ENCODE measurements at regions of chr11 and their contacts with region 1.

Region 1: DNA sequence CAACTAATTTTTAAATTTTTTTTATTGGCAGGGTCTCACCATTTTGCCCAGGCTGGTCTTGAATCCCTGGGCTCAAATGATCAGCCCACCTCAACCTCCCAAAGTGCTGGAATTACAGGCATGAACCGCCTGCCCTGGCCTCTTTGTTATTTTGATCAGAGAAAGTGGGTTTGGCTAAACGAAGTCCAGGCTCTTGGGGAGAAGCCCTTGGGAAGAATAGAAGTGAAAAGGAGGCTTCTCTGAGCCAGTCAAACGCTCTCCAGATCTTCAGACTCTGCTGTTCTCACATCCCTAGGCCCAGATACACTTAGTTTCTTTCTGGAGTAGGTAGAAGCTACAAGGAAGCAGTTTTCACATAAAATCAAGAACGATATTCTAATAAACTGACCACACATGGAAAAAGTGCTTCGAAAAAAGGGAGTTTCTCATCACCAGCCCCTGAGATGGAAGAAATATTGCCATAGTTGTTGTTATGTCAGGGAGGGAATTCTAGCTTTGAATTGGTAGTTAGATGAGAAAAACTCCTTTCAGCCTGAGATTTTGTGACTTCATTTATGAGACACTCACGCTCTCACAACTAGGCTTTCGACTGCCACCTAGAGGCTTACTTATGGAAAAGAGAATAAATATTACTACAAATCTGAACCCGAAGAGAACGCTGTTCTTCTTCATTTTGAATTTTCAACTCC is 41.7 kb upstream of the AQP11 start:
- DNase-seq: peak; percentile 38
- ATAC-seq: peak; percentile 83
- H3K4me3 ChIP-seq: no peak overlapping the region
- H3K27ac ChIP-seq: no peak overlapping the region
- H3K4me1 ChIP-seq: no peaks in the 10 kb centered on the region
- H3K27me3 ChIP-seq: no peaks in the 10 kb centered on the region
- CTCF ChIP-seq: peak; percentile 46 to 76 (median 59); a peak in 5 of 6 replicates
- EP300 ChIP-seq: no peak
- POLR2A ChIP-seq: no peak
- RAD21 ChIP-seq: peak; percentile 92

Region 2: DNA sequence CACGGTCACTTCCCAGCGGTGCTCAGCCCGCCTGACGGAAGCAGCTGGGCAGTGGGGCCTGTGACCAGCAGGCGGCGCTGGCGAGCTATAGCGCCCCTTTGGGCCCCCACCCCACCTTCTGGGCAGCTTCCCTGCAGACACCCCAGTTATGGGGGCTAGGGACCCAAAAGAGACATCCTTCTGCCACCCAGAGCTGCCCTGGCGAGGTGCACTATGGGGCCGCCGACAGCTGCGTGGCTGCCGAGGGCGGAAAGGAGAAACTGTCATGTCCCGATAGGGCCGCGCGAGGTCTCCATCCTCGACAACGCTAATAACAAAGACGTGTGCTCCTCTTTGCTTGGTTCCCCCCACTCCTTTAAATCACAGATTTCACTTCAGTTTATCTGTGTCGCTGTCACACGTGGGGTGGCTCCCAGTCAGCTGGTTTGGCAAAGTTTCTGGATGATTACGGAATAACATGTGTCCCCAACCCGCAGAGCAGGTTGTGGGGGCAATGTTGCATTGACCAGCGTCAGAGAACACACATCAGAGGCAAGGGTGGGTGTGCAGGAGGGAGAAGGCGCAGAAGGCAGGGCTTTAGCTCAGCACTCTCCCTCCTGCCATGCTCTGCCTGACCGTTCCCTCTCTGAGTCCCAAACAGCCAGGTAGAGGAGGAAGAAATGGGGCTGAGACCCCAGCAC is 420.6 kb before region 1 on chr11:
- CTCF ChIA-PET with region 1: interaction called, 23 read pairs
- POLR2A ChIA-PET with region 1: interaction called, 4 read pairs
- RAD21 ChIA-PET with region 1: interaction called, 13 read pairs
- SMC1A ChIA-PET with region 1: interaction called, 10 read pairs
- in situ Hi-C with region 1: no loop called
- intact Hi-C with region 1: loop called (anchors 5 kb)
- DNase-seq: no peak
- ATAC-seq: peak; percentile 88
- H3K4me3 ChIP-seq: no peak overlapping the region
- H3K27ac ChIP-seq: no peak overlapping the region
- H3K4me1 ChIP-seq: 0 out of 2 replicates have a peak, but pooled peaks cover 3% of the 10 kb centered on the region
- H3K27me3 ChIP-seq: peaks cover 0 to 3% of the 10 kb centered on the region in 2 experiments; a peak in 2 of 4 replicates
- CTCF ChIP-seq: peak; percentile 84 to 99 (median 98)
- EP300 ChIP-seq: no peak
- POLR2A ChIP-seq: no peak
- RAD21 ChIP-seq: peak; percentile 59

Region 3: GRCh38 chr11:77198440-77198849 is 349.6 kb before region 1 on chr11:
- CTCF ChIA-PET with region 1: interaction called, 40 read pairs
- POLR2A ChIA-PET with region 1: no interaction called
- RAD21 ChIA-PET with region 1: interaction called, 26 read pairs
- SMC1A ChIA-PET with region 1: interaction called, 19 read pairs
- in situ Hi-C with region 1: loop called (anchors 5 kb)
- intact Hi-C with region 1: loop called (anchors 2 kb)
- DNase-seq: no peak
- ATAC-seq: peak; percentile 83
- H3K4me3 ChIP-seq: no peak overlapping the region
- H3K27ac ChIP-seq: no peak overlapping the region
- H3K4me1 ChIP-seq: no peaks in the 10 kb centered on the region
- H3K27me3 ChIP-seq: no peaks in the 10 kb centered on the region
- CTCF ChIP-seq: peak in 2 of 3 experiments; percentile 45 to 51; a peak in 3 of 6 replicates
- EP300 ChIP-seq: no peak
- POLR2A ChIP-seq: no peak
- RAD21 ChIP-seq: no peak

Region 4: DNA sequence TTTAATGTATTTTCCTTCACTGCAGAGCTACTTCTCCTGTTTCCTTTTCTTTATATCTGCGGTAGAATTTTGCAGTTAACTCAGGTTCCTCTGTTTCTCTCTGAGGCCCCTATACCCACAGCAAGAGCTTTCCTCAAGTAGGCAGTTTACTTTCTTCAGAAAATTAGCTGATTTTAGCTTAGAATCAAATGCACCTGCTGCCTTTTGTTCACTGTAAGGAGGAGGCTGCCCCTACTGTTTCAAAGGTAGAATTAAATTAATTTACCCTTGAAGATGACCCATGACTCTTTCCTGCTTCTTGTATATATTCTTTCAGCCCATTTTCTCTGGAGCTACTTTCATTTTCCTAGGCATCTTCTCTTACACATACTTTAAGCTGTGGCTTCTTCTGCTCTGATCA is 177.8 kb before region 1 on chr11:
- CTCF ChIA-PET with region 1: interaction called, 10 read pairs
- POLR2A ChIA-PET with region 1: no interaction called
- RAD21 ChIA-PET with region 1: no interaction called
- SMC1A ChIA-PET with region 1: no interaction called
- in situ Hi-C with region 1: no loop called
- intact Hi-C with region 1: no loop called
- DNase-seq: no peak
- ATAC-seq: peak; percentile 39; the same call in 1 of the 3 replicates
- H3K4me3 ChIP-seq: no peak overlapping the region
- H3K27ac ChIP-seq: no peak overlapping the region
- H3K4me1 ChIP-seq: no peaks in the 10 kb centered on the region
- H3K27me3 ChIP-seq: no peaks in the 10 kb centered on the region
- CTCF ChIP-seq: no peak; a peak in 1 of 6 replicates
- EP300 ChIP-seq: no peak
- POLR2A ChIP-seq: no peak
- RAD21 ChIP-seq: no peak

Region 5: GRCh38 chr11:77400773-77401449 is 147.1 kb before region 1 on chr11:
- CTCF ChIA-PET with region 1: interaction called, 17 read pairs
- POLR2A ChIA-PET with region 1: no interaction called
- RAD21 ChIA-PET with region 1: interaction called, 13 read pairs
- SMC1A ChIA-PET with region 1: interaction called, 14 read pairs
- in situ Hi-C with region 1: no loop called
- intact Hi-C with region 1: no loop called
- DNase-seq: no peak
- ATAC-seq: peak; percentile 75
- H3K4me3 ChIP-seq: no peak overlapping the region
- H3K27ac ChIP-seq: peak overlapping the region; percentile 17; the same call in 1 of the 2 replicates
- H3K4me1 ChIP-seq: peaks cover 19% of the 10 kb centered on the region
- H3K27me3 ChIP-seq: no peaks in the 10 kb centered on the region
- CTCF ChIP-seq: peak; percentile 14 to 28 (median 26); a peak in 4 of 6 replicates
- EP300 ChIP-seq: no peak
- POLR2A ChIP-seq: no peak
- RAD21 ChIP-seq: 0 out of 2 replicates have a peak, but pooled peaks have one; percentile 14

Region 6: GRCh38 chr11:77449060-77449521 is 98.9 kb before region 1 on chr11:
- CTCF ChIA-PET with region 1: interaction called, 3 read pairs
- POLR2A ChIA-PET with region 1: no interaction called
- RAD21 ChIA-PET with region 1: interaction called, 4 read pairs
- SMC1A ChIA-PET with region 1: interaction called, 14 read pairs
- in situ Hi-C with region 1: no loop called
- intact Hi-C with region 1: no loop called
- DNase-seq: peak; percentile 91
- ATAC-seq: peak; percentile 76
- H3K4me3 ChIP-seq: peak overlapping the region; percentile 8; the same call in 1 of the 2 replicates
- H3K27ac ChIP-seq: peak overlapping the region; percentile 92
- H3K4me1 ChIP-seq: peaks cover 76% of the 10 kb centered on the region
- H3K27me3 ChIP-seq: no peaks in the 10 kb centered on the region
- CTCF ChIP-seq: no peak
- EP300 ChIP-seq: peak in 1 of 2 experiments; percentile 76; a peak in 3 of 4 replicates
- POLR2A ChIP-seq: no peak
- RAD21 ChIP-seq: peak; percentile 14; the same call in 1 of the 2 replicates

Region 7: GRCh38 chr11:77619576-77620198 is 71.7 kb after region 1 on chr11:
- CTCF ChIA-PET with region 1: interaction called, 18 read pairs
- POLR2A ChIA-PET with region 1: no interaction called
- RAD21 ChIA-PET with region 1: interaction called, 4 read pairs
- SMC1A ChIA-PET with region 1: interaction called, 9 read pairs
- in situ Hi-C with region 1: no loop called
- intact Hi-C with region 1: no loop called
- DNase-seq: peak; percentile 28
- ATAC-seq: peak; percentile 66
- H3K4me3 ChIP-seq: no peak overlapping the region
- H3K27ac ChIP-seq: no peak overlapping the region
- H3K4me1 ChIP-seq: no peaks in the 10 kb centered on the region
- H3K27me3 ChIP-seq: no peaks in the 10 kb centered on the region
- CTCF ChIP-seq: peak; percentile 66 to 77 (median 67); a peak in 5 of 6 replicates
- EP300 ChIP-seq: no peak
- POLR2A ChIP-seq: no peak
- RAD21 ChIP-seq: peak; percentile 76

Measured in GM12878 (cell line).